Panc1 (cell line): ENCODE measurements at regions of chr2 and their contacts with region 1.

Region 1: GRCh38 chr2:231411831-231412617 is 16.5 kb downstream of the B3GNT7 start:
- DNase-seq: peak; percentile 57
- ATAC-seq: peak; percentile 98
- H3K4me3 ChIP-seq: peak overlapping the region; percentile 65 to 79
- H3K27ac ChIP-seq: peak overlapping the region; percentile 78
- H3K4me1 ChIP-seq: peaks cover 27% of the 10 kb centered on the region
- H3K27me3 ChIP-seq: no peaks in the 10 kb centered on the region
- CTCF ChIP-seq: peak; percentile 98

Region 2: GRCh38 chr2:231124838-231125568 is 287.0 kb before region 1 on chr2 and contains the start of gene HTR2B:
- CTCF ChIA-PET with region 1: no interaction called
- POLR2A ChIA-PET with region 1: no interaction called
- in situ Hi-C with region 1: no loop called
- intact Hi-C with region 1: no loop called
- DNase-seq: no peak
- ATAC-seq: no peak
- H3K4me3 ChIP-seq: no peak within 1 kb of the TSS
- H3K27ac ChIP-seq: no peak within 1 kb of the TSS; the same call in 1 of the 2 replicates
- H3K4me1 ChIP-seq: peaks cover 7% of the 10 kb centered on the region
- H3K27me3 ChIP-seq: no peaks in the 10 kb centered on the region
- CTCF ChIP-seq: no peak
- total RNA-seq, gene HTR2B: not detected

Region 3: GRCh38 chr2:231227309-231228162 is 184.5 kb before region 1 on chr2:
- CTCF ChIA-PET with region 1: no interaction called
- POLR2A ChIA-PET with region 1: no interaction called
- in situ Hi-C with region 1: no loop called
- intact Hi-C with region 1: loop called (anchors 5 kb)
- DNase-seq: peak; percentile 46
- ATAC-seq: peak; percentile 98
- H3K4me3 ChIP-seq: no peak overlapping the region
- H3K27ac ChIP-seq: peak overlapping the region; percentile 20; the same call in 1 of the 2 replicates
- H3K4me1 ChIP-seq: 0 out of 2 replicates have a peak, but pooled peaks cover 4% of the 10 kb centered on the region
- H3K27me3 ChIP-seq: no peaks in the 10 kb centered on the region
- CTCF ChIP-seq: peak; percentile 88

Region 4: GRCh38 chr2:232869138-232870017 is 1457.4 kb after region 1 on chr2:
- CTCF ChIA-PET with region 1: no interaction called
- POLR2A ChIA-PET with region 1: no interaction called
- in situ Hi-C with region 1: no loop called
- intact Hi-C with region 1: no loop called
- DNase-seq: no peak
- ATAC-seq: peak; percentile 47; the same call in 1 of the 2 replicates
- H3K4me3 ChIP-seq: no peak overlapping the region
- H3K27ac ChIP-seq: no peak overlapping the region
- H3K4me1 ChIP-seq: peaks cover 10% of the 10 kb centered on the region
- H3K27me3 ChIP-seq: no peaks in the 10 kb centered on the region
- CTCF ChIP-seq: no peak; the same call in 1 of the 2 replicates